AG04450 (cell line): ENCODE measurements at regions of chr3 and their contacts with region 1.

Region 1: GRCh38 chr3:173045770-173046382 is 95.2 kb downstream of the SPATA16 start:
- DNase-seq: no peak
- H3K4me3 ChIP-seq: no peak overlapping the region
- H3K27ac ChIP-seq: no peak overlapping the region
- H3K27me3 ChIP-seq: no peaks in the 10 kb centered on the region
- CTCF ChIP-seq: peak; percentile 35; the same call in 1 of the 2 replicates

Region 2: GRCh38 chr3:172808969-172809546 is 236.8 kb before region 1 on chr3:
- CTCF ChIA-PET with region 1: interaction called, 13 read pairs
- POLR2A ChIA-PET with region 1: no interaction called
- DNase-seq: peak; percentile 10
- H3K4me3 ChIP-seq: no peak overlapping the region
- H3K27ac ChIP-seq: no peak overlapping the region
- H3K27me3 ChIP-seq: no peaks in the 10 kb centered on the region
- CTCF ChIP-seq: peak; percentile 27